H1 (cell line): ENCODE measurements at regions of chr14 and their contacts with region 1.

Region 1: DNA sequence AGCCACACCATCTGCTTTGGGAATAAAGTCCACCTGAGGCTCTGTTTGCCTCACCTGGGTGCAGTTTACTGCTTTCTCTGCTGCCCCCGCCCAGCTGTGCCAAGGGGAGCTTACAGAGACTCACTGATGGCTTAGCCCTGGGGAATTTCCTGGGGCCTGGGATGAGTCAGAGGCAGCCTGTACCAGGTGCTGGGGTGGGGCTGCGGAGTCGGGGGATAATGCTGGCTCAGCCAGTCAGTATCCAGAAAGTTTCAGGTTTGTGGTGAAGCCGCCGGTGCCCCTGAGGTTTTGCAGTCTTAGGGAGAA is 22.3 kb downstream of the PLEKHG3 start:
- DNase-seq: no peak
- H3K4me3 ChIP-seq: peak overlapping the region in 1 of 4 experiments; percentile 7; a peak in 1 of 8 replicates
- H3K27ac ChIP-seq: no peak overlapping the region
- H3K4me1 ChIP-seq: peaks cover 24 to 44% (median 38%) of the 10 kb centered on the region in 4 experiments
- H3K27me3 ChIP-seq: no peaks in the 10 kb centered on the region
- CTCF ChIP-seq: no peak
- EP300 ChIP-seq: no peak
- POLR2A ChIP-seq: no peak
- RAD21 ChIP-seq: no peak

Region 2: DNA sequence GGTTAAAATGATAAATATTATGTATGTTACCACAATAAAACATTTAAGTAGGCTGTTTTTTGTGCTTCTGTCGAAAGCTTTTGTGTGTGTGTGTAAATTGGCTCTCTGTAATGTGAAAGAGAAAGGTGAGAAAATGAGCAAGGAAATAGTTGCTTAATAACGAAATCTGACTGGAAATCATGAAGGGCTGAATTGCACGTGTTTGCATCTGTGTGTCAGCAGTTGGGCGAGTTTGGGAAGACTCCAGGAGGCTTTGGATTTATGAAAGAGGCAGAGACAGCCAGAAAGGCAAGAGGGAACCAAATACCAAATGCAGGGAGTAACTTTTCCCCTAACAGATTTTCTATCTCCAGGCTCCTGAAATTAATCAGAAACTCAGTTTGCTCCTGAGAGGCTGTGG is 69.6 kb before region 1 on chr14:
- CTCF ChIA-PET with region 1: no interaction called
- POLR2A ChIA-PET with region 1: no interaction called
- DNase-seq: no peak
- H3K4me3 ChIP-seq: no peak overlapping the region
- H3K27ac ChIP-seq: no peak overlapping the region
- H3K4me1 ChIP-seq: no peaks in the 10 kb centered on the region
- H3K27me3 ChIP-seq: no peaks in the 10 kb centered on the region
- CTCF ChIP-seq: no peak
- EP300 ChIP-seq: no peak
- POLR2A ChIP-seq: no peak
- RAD21 ChIP-seq: no peak

Region 3: DNA sequence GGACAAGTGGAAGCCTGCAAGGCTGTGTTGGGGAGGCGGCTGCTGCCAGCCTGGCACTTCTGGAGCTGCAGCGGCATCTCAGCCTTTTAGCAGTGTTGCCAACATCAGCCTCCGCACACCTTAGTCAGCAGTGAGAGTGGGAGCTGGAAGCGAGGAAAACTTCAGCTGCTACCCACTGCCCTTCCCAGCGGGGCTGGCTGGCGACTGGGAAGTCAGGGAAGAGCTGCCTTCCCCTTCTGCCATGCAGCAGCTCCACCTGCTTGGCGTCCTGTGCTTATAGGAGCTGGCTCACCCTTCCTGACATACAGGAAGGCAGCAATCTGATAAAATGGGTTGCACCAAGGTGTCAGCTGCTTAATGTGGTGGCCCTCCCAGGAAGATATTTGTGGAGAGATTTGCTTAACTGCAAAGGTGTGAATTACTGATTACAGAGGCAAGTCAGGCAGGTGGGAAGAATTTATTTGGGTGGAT is 37.7 kb before region 1 on chr14:
- CTCF ChIA-PET with region 1: interaction called, 10 read pairs
- POLR2A ChIA-PET with region 1: no interaction called
- DNase-seq: no peak
- H3K4me3 ChIP-seq: no peak overlapping the region
- H3K27ac ChIP-seq: no peak overlapping the region
- H3K4me1 ChIP-seq: peaks cover 0 to 9% (median 3%) of the 10 kb centered on the region in 4 experiments; a peak in 3 of 7 replicates
- H3K27me3 ChIP-seq: peaks cover 0 to 5% (median 5%) of the 10 kb centered on the region in 4 experiments; a peak in 4 of 7 replicates
- CTCF ChIP-seq: no peak
- EP300 ChIP-seq: no peak
- POLR2A ChIP-seq: no peak
- RAD21 ChIP-seq: no peak

Region 4: GRCh38 chr14:64745511-64746091 is 19.1 kb after region 1 on chr14:
- CTCF ChIA-PET with region 1: interaction called, 11 read pairs
- POLR2A ChIA-PET with region 1: interaction called, 3 read pairs
- DNase-seq: no peak
- H3K4me3 ChIP-seq: no peak overlapping the region
- H3K27ac ChIP-seq: no peak overlapping the region
- H3K4me1 ChIP-seq: no peaks in the 10 kb centered on the region
- H3K27me3 ChIP-seq: no peaks in the 10 kb centered on the region
- CTCF ChIP-seq: peak in 1 of 3 experiments; percentile 25; a peak in 1 of 4 replicates
- EP300 ChIP-seq: no peak
- POLR2A ChIP-seq: no peak
- RAD21 ChIP-seq: peak; percentile 32 to 49; a peak in 2 of 4 replicates